ENCODE measurements at regions of chr20 and their contacts with region 1.

Region 1: GRCh38 chr20:49110767-49111694 is 64.9 kb downstream of the CSE1L start:
- DNase-seq: no peak
- H3K4me3 Mint-ChIP-seq: no peak overlapping the region
- H3K27ac Mint-ChIP-seq: no peak overlapping the region
- H3K4me1 Mint-ChIP-seq: no peaks in the 10 kb centered on the region
- H3K27me3 Mint-ChIP-seq: no peaks in the 10 kb centered on the region

Region 2: GRCh38 chr20:48970551-48971365 is 140.3 kb before region 1 on chr20:
- CTCF ChIA-PET with region 1: no interaction called
- POLR2A ChIA-PET with region 1: interaction called, 13 read pairs
- DNase-seq: no peak
- H3K4me3 Mint-ChIP-seq: no peak overlapping the region
- H3K27ac Mint-ChIP-seq: no peak overlapping the region
- H3K4me1 Mint-ChIP-seq: no peaks in the 10 kb centered on the region
- H3K27me3 Mint-ChIP-seq: no peaks in the 10 kb centered on the region

Region 3: GRCh38 chr20:49140834-49141233 is 29.8 kb after region 1 on chr20:
- CTCF ChIA-PET with region 1: no interaction called
- POLR2A ChIA-PET with region 1: no interaction called
- DNase-seq: no peak
- H3K4me3 Mint-ChIP-seq: no peak overlapping the region
- H3K27ac Mint-ChIP-seq: no peak overlapping the region
- H3K4me1 Mint-ChIP-seq: peaks cover 20% of the 10 kb centered on the region
- H3K27me3 Mint-ChIP-seq: no peaks in the 10 kb centered on the region

Measured in activated CD4-positive, alpha-beta T cell treated with anti-CD3 and anti-CD28 coated beads, Interleukin-2, amount 10 ng/mL, durations not matched to agents 7 days and 5 days (primary cell).